Sigmoid colon (tissue), 7 donors: ENCODE measurements at regions of chr2 and their contacts with region 1.

Region 1: DNA sequence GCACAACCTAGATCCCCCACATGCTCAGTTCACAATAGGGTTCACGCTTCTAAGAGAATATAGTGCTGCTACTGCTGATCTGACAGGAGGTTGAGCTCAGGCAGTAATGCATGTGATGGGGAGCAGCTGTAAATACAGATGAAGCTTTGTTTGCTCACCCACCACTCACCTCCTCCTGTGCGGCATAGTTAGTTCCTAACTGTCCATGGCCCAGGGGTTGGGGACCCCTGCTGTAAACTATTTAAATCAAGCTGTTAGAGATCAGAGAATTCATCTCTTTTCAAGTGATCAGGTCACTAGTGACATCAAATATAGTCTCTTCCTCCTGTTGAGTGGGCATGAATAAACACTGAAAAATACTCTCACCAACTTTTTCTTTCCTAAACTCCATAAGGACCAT is 88.7 kb upstream of the ACVR2A start:
- DNase-seq: no peak
- H3K4me3 ChIP-seq: no peak overlapping the region
- H3K27ac ChIP-seq: no peak overlapping the region
- H3K4me1 ChIP-seq: no peaks in the 10 kb centered on the region
- H3K27me3 ChIP-seq: no peaks in the 10 kb centered on the region
- CTCF ChIP-seq: no peak
- EP300 ChIP-seq: no peak
- POLR2A ChIP-seq: no peak

Region 2: GRCh38 chr2:147818741-147819140 is 62.6 kb after region 1 on chr2:
- intact Hi-C with region 1: loop called (anchors 10 kb)
- DNase-seq: no peak
- H3K4me3 ChIP-seq: no peak overlapping the region
- H3K27ac ChIP-seq: no peak overlapping the region
- H3K4me1 ChIP-seq: no peaks in the 10 kb centered on the region
- H3K27me3 ChIP-seq: no peaks in the 10 kb centered on the region
- CTCF ChIP-seq: no peak
- EP300 ChIP-seq: no peak
- POLR2A ChIP-seq: no peak

Region 3: GRCh38 chr2:147980940-147981528 is 224.9 kb after region 1 on chr2:
- intact Hi-C with region 1: no loop called
- DNase-seq: no peak
- H3K4me3 ChIP-seq: no peak overlapping the region
- H3K27ac ChIP-seq: no peak overlapping the region
- H3K4me1 ChIP-seq: peaks cover 0 to 20% (median 7%) of the 10 kb centered on the region in 4 donors
- H3K27me3 ChIP-seq: no peaks in the 10 kb centered on the region
- CTCF ChIP-seq: no peak
- EP300 ChIP-seq: no peak
- POLR2A ChIP-seq: no peak